Ovary (tissue), 10 donors: ENCODE measurements at regions of chr5 and their contacts with region 1.

Region 1: GRCh38 chr5:142881076-142881783 is 111.1 kb downstream of the ARHGAP26 start:
- DNase-seq: no peak
- H3K4me3 ChIP-seq: no peak overlapping the region
- H3K27ac ChIP-seq: no peak overlapping the region
- H3K4me1 ChIP-seq: no peaks in the 10 kb centered on the region
- H3K27me3 ChIP-seq: no peaks in the 10 kb centered on the region
- CTCF ChIP-seq: no peak
- EP300 ChIP-seq: no peak
- POLR2A ChIP-seq: no peak

Region 2: DNA sequence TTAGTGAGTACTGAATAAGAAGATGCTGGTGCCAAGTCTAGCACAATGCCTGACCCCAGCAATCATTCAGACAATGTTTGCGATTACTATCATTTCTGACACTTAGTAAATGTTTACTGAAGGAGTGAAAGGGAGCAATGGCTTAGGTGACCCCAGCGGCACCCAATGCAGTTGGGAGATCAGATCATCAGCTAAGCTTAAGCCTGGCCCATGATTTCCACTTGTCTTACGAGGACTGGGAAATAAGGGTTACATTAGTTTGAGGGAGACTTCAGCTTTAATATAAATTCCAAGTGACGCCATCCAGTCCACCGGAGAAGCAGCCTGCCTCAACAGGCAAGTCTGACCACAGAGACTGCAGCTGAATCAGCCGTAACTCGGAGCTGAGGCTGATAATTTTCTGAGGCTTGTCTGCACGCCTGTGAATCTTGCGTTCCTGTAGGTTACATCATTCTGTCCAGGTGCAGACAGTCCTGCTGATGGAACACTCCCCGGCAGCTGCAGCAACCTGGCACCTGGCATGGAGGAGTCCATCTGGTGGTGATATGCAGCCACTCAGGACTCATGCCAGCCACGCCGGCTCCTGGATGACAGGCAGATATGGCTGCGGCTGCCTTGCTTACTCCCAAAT is 160.5 kb before region 1 on chr5:
- intact Hi-C with region 1: loop called in 1 of 4 experiments (anchors 5 kb)
- DNase-seq: no peak
- H3K4me3 ChIP-seq: no peak overlapping the region
- H3K27ac ChIP-seq: no peak overlapping the region
- H3K4me1 ChIP-seq: no peaks in the 10 kb centered on the region
- H3K27me3 ChIP-seq: no peaks in the 10 kb centered on the region
- CTCF ChIP-seq: no peak
- EP300 ChIP-seq: no peak
- POLR2A ChIP-seq: no peak